ENCODE measurements at regions of chr12 and their contacts with region 1.

Region 1: DNA sequence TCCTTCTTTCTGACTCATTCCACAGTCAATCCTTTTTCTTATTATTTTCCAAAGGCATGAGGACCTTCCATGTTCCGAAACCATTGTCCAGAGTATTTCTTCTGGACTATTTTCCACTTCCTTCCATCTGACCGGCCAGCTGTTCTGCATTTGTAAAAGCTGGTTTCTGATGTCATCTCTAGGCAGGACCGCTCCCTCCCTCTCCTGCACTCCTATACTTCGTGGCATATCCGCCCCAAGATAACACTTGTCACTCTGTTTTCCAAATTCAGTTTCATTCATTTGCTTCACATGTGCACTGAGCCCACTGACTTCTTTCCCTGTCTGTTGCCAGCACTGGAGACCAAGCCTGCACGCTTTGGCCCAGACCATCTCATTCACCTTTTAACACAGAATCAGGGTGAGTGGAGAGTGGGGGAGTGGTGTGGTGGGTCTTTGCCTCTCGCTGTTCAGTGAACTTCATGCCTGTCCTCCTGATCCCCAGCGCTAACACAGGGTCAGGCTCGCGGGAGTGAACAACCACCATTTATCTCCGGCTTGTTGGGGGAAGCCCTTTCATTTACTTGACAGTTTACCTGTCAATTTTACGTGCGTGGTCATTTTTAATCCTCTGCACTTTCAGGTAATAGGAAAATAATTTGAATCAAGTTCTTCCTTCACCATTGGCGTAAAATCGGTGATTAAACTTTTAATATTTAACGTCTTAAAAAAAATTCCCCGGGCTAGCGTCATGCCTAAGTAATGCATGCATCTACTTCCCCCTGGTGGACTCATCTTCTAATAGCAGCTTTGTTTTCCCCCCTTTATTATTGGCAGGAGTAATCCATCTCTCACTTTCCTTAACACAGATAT is 52.5 kb downstream of the C12orf75 start:
- DNase-seq: peak; percentile 70
- H3K4me3 ChIP-seq: peak overlapping the region in 1 of 2 experiments; percentile 24; a peak in 1 of 4 replicates
- H3K27ac ChIP-seq: peak overlapping the region in 1 of 2 experiments; percentile 27; a peak in 2 of 4 replicates
- H3K4me1 ChIP-seq: peaks cover 3 to 6% of the 10 kb centered on the region in 2 experiments; a peak in 1 of 4 replicates
- H3K27me3 ChIP-seq: no peaks in the 10 kb centered on the region
- CTCF ChIP-seq: peak; percentile 84
- EP300 ChIP-seq: no peak
- RAD21 ChIP-seq: peak; percentile 92

Region 2: GRCh38 chr12:105267711-105268110 is 115.3 kb before region 1 on chr12:
- CTCF ChIA-PET with region 1: interaction called, 13 read pairs
- POLR2A ChIA-PET with region 1: no interaction called
- DNase-seq: no peak
- H3K4me3 ChIP-seq: no peak overlapping the region
- H3K27ac ChIP-seq: no peak overlapping the region
- H3K4me1 ChIP-seq: peaks cover 8 to 20% of the 10 kb centered on the region in 2 experiments
- H3K27me3 ChIP-seq: no peaks in the 10 kb centered on the region
- CTCF ChIP-seq: no peak
- EP300 ChIP-seq: no peak
- RAD21 ChIP-seq: no peak

Region 3: DNA sequence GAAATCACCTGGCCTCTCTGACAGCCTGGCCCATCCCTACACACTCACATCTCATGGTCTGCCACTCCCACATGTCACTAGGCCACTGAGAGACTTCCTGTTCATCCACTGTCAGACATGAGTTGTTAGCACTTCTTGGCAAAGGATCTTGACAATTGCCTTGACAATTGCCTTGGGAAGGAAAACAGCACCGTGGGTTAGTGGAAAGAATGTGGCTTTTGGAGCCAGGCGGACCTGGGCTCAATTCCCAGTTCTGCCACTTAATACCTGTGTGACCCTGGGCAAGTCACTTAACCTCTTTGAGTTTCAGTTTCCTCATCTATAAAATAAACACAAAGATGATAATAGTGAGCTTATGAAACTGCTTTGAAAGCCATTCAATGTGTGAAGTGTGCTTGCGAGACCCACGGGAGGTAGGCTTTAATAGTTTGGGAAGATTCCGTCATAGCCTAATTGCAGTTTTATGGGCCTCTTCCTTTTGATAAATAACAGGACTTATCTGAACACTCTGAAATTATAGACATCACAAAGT is 197.9 kb after region 1 on chr12:
- CTCF ChIA-PET with region 1: no interaction called
- POLR2A ChIA-PET with region 1: no interaction called
- DNase-seq: no peak
- H3K4me3 ChIP-seq: no peak overlapping the region
- H3K27ac ChIP-seq: no peak overlapping the region
- H3K4me1 ChIP-seq: no peaks in the 10 kb centered on the region
- H3K27me3 ChIP-seq: no peaks in the 10 kb centered on the region
- CTCF ChIP-seq: no peak
- EP300 ChIP-seq: no peak
- RAD21 ChIP-seq: no peak